AG04450 (cell line): ENCODE measurements at regions of chr2 and their contacts with region 1.

Region 1: GRCh38 chr2:64330281-64331113 is 123.5 kb upstream of the LGALSL start:
- DNase-seq: peak; percentile 80
- H3K4me3 ChIP-seq: peak overlapping the region; percentile 57
- H3K27ac ChIP-seq: no peak overlapping the region
- H3K27me3 ChIP-seq: no peaks in the 10 kb centered on the region
- CTCF ChIP-seq: peak; percentile 90

Region 2: DNA sequence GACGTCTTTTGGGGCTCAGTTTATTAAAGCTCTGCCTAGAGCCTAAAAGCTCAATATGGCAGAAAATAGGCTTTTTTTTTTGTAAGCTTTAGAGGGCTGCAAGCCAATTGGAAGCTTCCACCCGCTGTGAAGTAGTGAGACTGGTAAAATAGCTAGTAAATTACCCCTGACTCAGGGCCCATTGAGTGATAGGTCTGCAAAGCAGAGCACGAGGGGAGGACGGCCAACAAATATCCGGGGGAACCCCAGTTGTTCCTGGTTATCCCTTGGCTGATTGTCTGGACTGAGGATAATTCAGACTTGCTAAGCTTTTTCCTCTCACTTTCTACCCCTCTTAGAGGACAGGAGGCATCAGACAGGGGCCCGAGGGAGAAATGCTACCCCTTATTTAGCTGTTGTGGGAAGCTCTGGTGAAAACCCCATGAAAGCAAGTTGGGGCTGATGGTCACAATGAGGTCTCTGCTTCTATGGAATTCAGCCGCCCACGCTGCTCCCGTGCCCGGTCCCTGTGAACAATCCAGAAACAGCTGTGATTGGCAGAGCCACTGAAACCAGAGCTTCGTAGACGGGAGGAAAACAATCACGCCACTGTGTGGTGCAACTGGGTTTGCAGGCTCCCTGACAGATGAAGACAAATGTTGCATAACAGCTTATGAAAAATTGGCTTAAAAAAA is 18.4 kb before region 1 on chr2:
- CTCF ChIA-PET with region 1: interaction called, 43 read pairs
- POLR2A ChIA-PET with region 1: no interaction called
- DNase-seq: peak; percentile 24
- H3K4me3 ChIP-seq: no peak overlapping the region
- H3K27ac ChIP-seq: peak overlapping the region; percentile 39
- H3K27me3 ChIP-seq: peaks cover 35% of the 10 kb centered on the region
- CTCF ChIP-seq: peak; percentile 41

Region 3: GRCh38 chr2:64410671-64411070 is 80.2 kb after region 1 on chr2:
- CTCF ChIA-PET with region 1: no interaction called
- POLR2A ChIA-PET with region 1: no interaction called
- DNase-seq: no peak
- H3K4me3 ChIP-seq: no peak overlapping the region
- H3K27ac ChIP-seq: no peak overlapping the region
- H3K27me3 ChIP-seq: peaks cover 16% of the 10 kb centered on the region
- CTCF ChIP-seq: no peak

Region 4: GRCh38 chr2:64488050-64488974 is 157.8 kb after region 1 on chr2:
- CTCF ChIA-PET with region 1: interaction called, 222 read pairs
- POLR2A ChIA-PET with region 1: no interaction called
- DNase-seq: peak; percentile 24
- H3K4me3 ChIP-seq: no peak overlapping the region
- H3K27ac ChIP-seq: no peak overlapping the region
- H3K27me3 ChIP-seq: peaks cover 39% of the 10 kb centered on the region
- CTCF ChIP-seq: peak; percentile 95

Region 5: GRCh38 chr2:64514008-64514407 is 183.5 kb after region 1 on chr2:
- CTCF ChIA-PET with region 1: interaction called, 11 read pairs
- POLR2A ChIA-PET with region 1: no interaction called
- DNase-seq: no peak
- H3K4me3 ChIP-seq: no peak overlapping the region
- H3K27ac ChIP-seq: no peak overlapping the region
- H3K27me3 ChIP-seq: peaks cover 19% of the 10 kb centered on the region
- CTCF ChIP-seq: no peak

Region 6: DNA sequence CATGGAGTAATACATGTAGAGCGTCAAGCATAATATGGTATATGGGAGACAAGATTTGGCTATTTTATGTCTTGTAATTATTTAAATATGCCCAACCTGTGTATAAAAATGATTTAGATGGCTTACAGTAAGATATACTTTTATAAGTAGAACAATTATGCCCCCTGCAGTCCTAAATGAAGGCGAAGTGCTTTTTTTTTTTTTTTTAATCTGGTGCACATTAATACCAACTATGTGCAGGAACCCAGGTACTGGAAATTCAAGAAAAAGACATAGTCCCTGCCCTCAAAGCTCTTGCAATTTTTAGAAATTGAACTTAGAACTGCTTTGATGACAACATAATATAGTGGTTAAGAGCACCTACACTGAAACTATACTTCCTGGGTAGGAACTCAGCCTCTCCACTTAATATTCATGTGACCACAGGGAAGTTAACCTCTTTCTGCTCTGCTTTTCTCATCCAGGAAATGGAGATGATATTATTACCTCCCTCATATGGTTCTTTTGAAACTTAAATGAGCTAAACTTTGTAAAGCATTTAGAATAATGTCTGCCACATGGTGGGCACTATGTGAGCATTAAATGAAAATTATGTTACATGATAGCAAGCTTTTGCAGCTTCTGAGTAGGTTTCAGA is 231.8 kb after region 1 on chr2:
- CTCF ChIA-PET with region 1: interaction called, 120 read pairs
- POLR2A ChIA-PET with region 1: no interaction called
- DNase-seq: no peak
- H3K4me3 ChIP-seq: no peak overlapping the region
- H3K27ac ChIP-seq: no peak overlapping the region
- H3K27me3 ChIP-seq: no peaks in the 10 kb centered on the region
- CTCF ChIP-seq: peak; percentile 50

Region 7: GRCh38 chr2:64675860-64676259 is 345.4 kb after region 1 on chr2:
- CTCF ChIA-PET with region 1: no interaction called
- POLR2A ChIA-PET with region 1: no interaction called
- DNase-seq: no peak
- H3K4me3 ChIP-seq: no peak overlapping the region
- H3K27ac ChIP-seq: no peak overlapping the region
- H3K27me3 ChIP-seq: no peaks in the 10 kb centered on the region
- CTCF ChIP-seq: no peak